ENCODE measurements at regions of chr17 and their contacts with region 1.

Region 1: GRCh38 chr17:65800655-65801054 is 239.2 kb upstream of the AXIN2 start:
- DNase-seq: no peak
- ATAC-seq: no peak
- H3K4me3 ChIP-seq: no peak overlapping the region
- H3K4me3 Mint-ChIP-seq: no peak overlapping the region
- H3K27ac ChIP-seq: no peak overlapping the region
- H3K27ac Mint-ChIP-seq: no peak overlapping the region
- H3K4me1 ChIP-seq: no peaks in the 10 kb centered on the region
- H3K4me1 Mint-ChIP-seq: no peaks in the 10 kb centered on the region
- H3K27me3 ChIP-seq: no peaks in the 10 kb centered on the region
- H3K27me3 Mint-ChIP-seq: no peaks in the 10 kb centered on the region
- CTCF ChIP-seq: no peak

Region 2: DNA sequence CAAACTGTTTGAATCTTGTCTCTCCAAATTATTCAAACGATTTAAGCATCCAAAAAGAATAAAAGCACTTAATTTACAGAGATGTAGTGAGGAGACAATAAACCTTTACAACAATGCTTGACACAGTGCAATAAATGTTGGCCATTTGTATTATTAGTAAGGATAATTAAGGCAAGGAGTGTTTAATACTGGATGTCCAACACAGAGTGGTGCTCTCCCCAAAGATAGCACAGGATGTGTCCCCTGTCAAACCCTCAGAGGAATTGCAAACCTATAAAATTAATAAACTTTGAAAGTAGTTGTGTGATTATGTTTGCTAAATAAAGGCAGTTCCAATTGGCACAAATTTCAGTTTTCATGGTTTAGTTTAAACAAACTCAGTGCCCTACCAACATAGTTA is 13.8 kb after region 1 on chr17:
- CTCF ChIA-PET with region 1: no interaction called
- POLR2A ChIA-PET with region 1: no interaction called
- intact Hi-C with region 1: no loop called
- DNase-seq: no peak
- ATAC-seq: no peak
- H3K4me3 ChIP-seq: no peak overlapping the region
- H3K4me3 Mint-ChIP-seq: no peak overlapping the region
- H3K27ac ChIP-seq: no peak overlapping the region
- H3K27ac Mint-ChIP-seq: no peak overlapping the region
- H3K4me1 ChIP-seq: no peaks in the 10 kb centered on the region
- H3K4me1 Mint-ChIP-seq: no peaks in the 10 kb centered on the region
- H3K27me3 ChIP-seq: peaks cover 2 to 4% of the 10 kb centered on the region in 2 experiments
- H3K27me3 Mint-ChIP-seq: peaks cover 12% of the 10 kb centered on the region
- CTCF ChIP-seq: no peak

Region 3: GRCh38 chr17:65830356-65830755 is 29.7 kb after region 1 on chr17:
- CTCF ChIA-PET with region 1: no interaction called
- POLR2A ChIA-PET with region 1: no interaction called
- intact Hi-C with region 1: loop called in 1 of 2 experiments (anchors 1 kb)
- DNase-seq: no peak
- ATAC-seq: no peak
- H3K4me3 ChIP-seq: no peak overlapping the region
- H3K4me3 Mint-ChIP-seq: no peak overlapping the region
- H3K27ac ChIP-seq: no peak overlapping the region
- H3K27ac Mint-ChIP-seq: no peak overlapping the region
- H3K4me1 ChIP-seq: no peaks in the 10 kb centered on the region
- H3K4me1 Mint-ChIP-seq: peaks cover 2% of the 10 kb centered on the region
- H3K27me3 ChIP-seq: no peaks in the 10 kb centered on the region
- H3K27me3 Mint-ChIP-seq: peaks cover 9% of the 10 kb centered on the region
- CTCF ChIP-seq: no peak

Measured in CD8-positive, alpha-beta T cell (primary cell).